Endothelial cell of umbilical vein (primary cell): ENCODE measurements at regions of chr6 and their contacts with region 1.

Region 1: DNA sequence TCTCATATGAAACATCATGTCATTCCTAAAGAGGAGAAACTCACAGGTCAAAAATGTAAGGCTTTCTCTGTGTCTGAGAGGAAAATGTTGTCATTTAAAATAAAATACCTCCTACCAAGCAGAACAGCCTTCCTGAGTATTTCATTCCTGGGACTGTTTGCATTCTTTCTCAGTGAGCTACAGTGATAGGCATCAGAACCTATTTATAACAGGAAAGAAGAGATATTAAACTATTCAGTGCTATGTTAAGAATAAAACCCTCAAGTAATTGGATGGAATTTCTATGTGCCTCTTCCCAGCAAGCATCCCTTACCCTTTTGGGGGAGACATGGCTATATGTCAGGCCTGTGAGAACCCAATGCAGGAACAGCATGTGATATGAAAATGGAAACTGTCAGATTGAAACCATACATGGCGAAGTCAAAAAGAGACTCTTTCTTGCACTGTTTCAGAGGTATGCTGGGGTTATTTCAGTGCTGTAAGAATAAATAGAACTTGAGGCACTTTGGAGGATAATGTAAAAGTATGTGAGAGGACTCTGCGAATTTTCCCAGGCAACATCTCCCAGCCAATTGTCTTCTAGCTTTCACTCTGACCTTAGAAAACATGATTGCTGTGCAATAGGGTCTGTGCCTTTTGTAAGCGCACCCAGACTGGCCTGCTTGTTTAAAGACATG is 133.8 kb upstream of the CCN2 start:
- DNase-seq: peak; percentile 95
- H3K4me3 ChIP-seq: peak overlapping the region in 1 of 3 experiments; percentile 15
- H3K27ac ChIP-seq: peak overlapping the region; percentile 99
- H3K4me1 ChIP-seq: peaks cover 56% of the 10 kb centered on the region
- H3K27me3 ChIP-seq: no peaks in the 10 kb centered on the region
- CTCF ChIP-seq: no peak
- POLR2A ChIP-seq: peak; percentile 57

Region 2: GRCh38 chr6:131979515-131980337 is 105.2 kb before region 1 on chr6:
- CTCF ChIA-PET with region 1: interaction called, 4 read pairs
- POLR2A ChIA-PET with region 1: no interaction called
- dilution Hi-C with region 1: no loop called
- intact Hi-C with region 1: loop called (anchors 1 kb)
- DNase-seq: peak; percentile 95
- H3K4me3 ChIP-seq: no peak overlapping the region
- H3K27ac ChIP-seq: peak overlapping the region; percentile 74
- H3K4me1 ChIP-seq: peaks cover 37% of the 10 kb centered on the region
- H3K27me3 ChIP-seq: no peaks in the 10 kb centered on the region
- CTCF ChIP-seq: no peak
- POLR2A ChIP-seq: no peak

Region 3: DNA sequence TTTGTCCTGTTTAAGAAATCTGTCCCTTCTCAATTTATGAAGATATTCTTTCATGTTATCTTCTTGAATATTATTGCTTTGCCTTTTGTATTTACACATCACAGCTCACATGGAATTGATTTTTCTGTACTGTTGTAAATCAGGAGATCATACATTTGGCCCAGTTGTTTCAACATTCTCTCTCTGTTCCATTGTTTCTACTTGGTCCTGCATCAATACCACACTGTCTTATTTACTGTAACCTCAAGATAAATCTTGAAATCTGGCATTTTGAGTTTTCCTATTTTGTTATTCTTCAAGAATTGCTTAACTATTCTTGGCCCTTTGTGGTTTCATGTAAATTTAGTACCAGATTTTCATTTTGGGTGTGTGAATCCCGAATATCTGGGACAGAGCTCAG is 12.1 kb before region 1 on chr6:
- CTCF ChIA-PET with region 1: interaction called, 5 read pairs
- POLR2A ChIA-PET with region 1: no interaction called
- dilution Hi-C with region 1: no loop called
- intact Hi-C with region 1: loop called (anchors 1 kb)
- DNase-seq: no peak
- H3K4me3 ChIP-seq: no peak overlapping the region
- H3K27ac ChIP-seq: peak overlapping the region; percentile 13
- H3K4me1 ChIP-seq: peaks cover 18% of the 10 kb centered on the region
- H3K27me3 ChIP-seq: no peaks in the 10 kb centered on the region
- CTCF ChIP-seq: no peak
- POLR2A ChIP-seq: no peak

Region 4: GRCh38 chr6:132131758-132132157 is 46.8 kb after region 1 on chr6:
- CTCF ChIA-PET with region 1: interaction called, 7 read pairs
- POLR2A ChIA-PET with region 1: interaction called, 29 read pairs
- dilution Hi-C with region 1: no loop called
- intact Hi-C with region 1: loop called (anchors 1 kb)
- DNase-seq: peak; percentile 99
- H3K4me3 ChIP-seq: peak overlapping the region in 1 of 3 experiments; percentile 95
- H3K27ac ChIP-seq: peak overlapping the region; percentile 100
- H3K4me1 ChIP-seq: peaks cover 54% of the 10 kb centered on the region
- H3K27me3 ChIP-seq: no peaks in the 10 kb centered on the region
- CTCF ChIP-seq: no peak
- POLR2A ChIP-seq: no peak